Naive thymus-derived CD4-positive, alpha-beta T cell (primary cell): ENCODE measurements at regions of chr13 and their contacts with region 1.

Region 1: DNA sequence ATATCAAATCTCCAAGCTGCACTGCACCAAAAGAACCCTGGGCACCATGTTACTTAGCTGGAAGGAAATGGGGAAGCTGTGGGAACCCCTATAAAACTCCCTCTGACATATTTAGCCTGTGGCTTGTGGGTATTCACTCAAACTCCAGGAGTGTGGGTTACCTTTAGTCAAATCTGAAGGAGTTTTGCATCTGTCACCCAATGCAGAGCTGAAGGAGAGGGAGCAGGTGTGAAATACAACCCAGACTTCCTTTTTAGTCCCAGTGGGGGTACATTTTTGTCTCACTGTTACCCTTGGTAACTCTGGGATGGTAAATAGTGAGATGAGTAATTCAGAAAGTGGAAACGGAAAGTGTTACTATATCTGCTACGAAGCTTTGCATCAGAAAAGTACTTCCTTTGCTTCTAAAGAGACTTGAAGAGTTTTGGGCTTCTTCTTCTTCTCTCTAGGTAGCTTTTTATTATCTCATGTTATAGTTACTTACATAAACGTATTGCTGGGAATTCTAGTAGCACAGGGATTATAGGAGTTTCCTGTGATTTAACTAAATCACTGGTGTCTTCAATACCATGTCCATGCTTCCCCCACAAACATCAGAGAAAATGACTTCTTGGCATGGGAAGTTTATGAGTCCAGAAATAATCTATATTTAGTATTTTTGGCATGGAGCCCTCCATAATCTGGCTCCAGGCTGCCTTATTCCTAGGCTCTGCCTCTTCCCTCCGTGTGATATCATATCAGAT is 105.9 kb downstream of the AKAP11 start:
- DNase-seq: peak in 2 of 9 donors; percentile 28 to 56
- ATAC-seq: peak; percentile 83
- H3K4me3 ChIP-seq: no peak overlapping the region
- H3K4me3 Mint-ChIP-seq: peak overlapping the region in 5 of 10 donors; percentile 16 to 63 (median 33)
- H3K27ac ChIP-seq: peak overlapping the region; percentile 19
- H3K27ac Mint-ChIP-seq: peak overlapping the region in 6 of 9 donors; percentile 33 to 92 (median 55)
- H3K4me1 ChIP-seq: peaks cover 17 to 18% of the 10 kb centered on the region in 2 donors
- H3K4me1 Mint-ChIP-seq: peaks cover 10 to 61% (median 29%) of the 10 kb centered on the region in 7 donors
- H3K27me3 ChIP-seq: no peaks in the 10 kb centered on the region
- H3K27me3 Mint-ChIP-seq: no peaks in the 10 kb centered on the region

Region 2: DNA sequence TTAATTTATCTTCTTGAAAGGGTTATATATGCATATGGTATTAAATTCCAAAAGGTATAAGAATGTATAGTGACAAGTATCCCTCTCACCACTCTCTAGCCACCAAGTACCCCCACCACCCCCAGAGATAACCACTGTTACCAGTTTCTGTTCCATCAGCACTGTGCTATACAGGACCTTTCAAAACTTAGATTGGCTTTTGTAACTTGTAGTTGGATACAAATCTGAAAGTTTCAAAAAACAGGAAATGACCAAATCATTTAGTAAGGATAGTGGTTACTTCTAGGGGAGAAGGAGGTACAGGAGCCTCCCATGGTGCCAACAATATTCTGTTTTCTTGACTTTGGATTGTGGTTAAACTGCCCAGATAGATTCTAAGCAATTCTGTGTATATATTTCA is 49.1 kb before region 1 on chr13:
- CTCF ChIA-PET with region 1: interaction called, 5 read pairs
- POLR2A ChIA-PET with region 1: no interaction called
- intact Hi-C with region 1: loop called in 1 of 2 experiments (anchors 2 kb)
- DNase-seq: peak in 1 of 9 donors; percentile 26
- ATAC-seq: no peak
- H3K4me3 ChIP-seq: no peak overlapping the region
- H3K4me3 Mint-ChIP-seq: peak overlapping the region in 9 of 10 donors; percentile 9 to 70 (median 49)
- H3K27ac ChIP-seq: no peak overlapping the region
- H3K27ac Mint-ChIP-seq: peak overlapping the region; percentile 55 to 88 (median 78)
- H3K4me1 ChIP-seq: peaks cover 9 to 11% of the 10 kb centered on the region in 2 donors
- H3K4me1 Mint-ChIP-seq: peaks cover 13 to 44% (median 24%) of the 10 kb centered on the region in 7 donors
- H3K27me3 ChIP-seq: no peaks in the 10 kb centered on the region
- H3K27me3 Mint-ChIP-seq: no peaks in the 10 kb centered on the region

Region 3: GRCh38 chr13:42405665-42406390 is 28.0 kb after region 1 on chr13:
- CTCF ChIA-PET with region 1: no interaction called
- POLR2A ChIA-PET with region 1: no interaction called
- intact Hi-C with region 1: loop called in 1 of 2 experiments (anchors 1 kb)
- DNase-seq: peak in 1 of 9 donors; percentile 70
- ATAC-seq: peak; percentile 57
- H3K4me3 ChIP-seq: no peak overlapping the region
- H3K4me3 Mint-ChIP-seq: peak overlapping the region in 2 of 10 donors; percentile 3 to 62
- H3K27ac ChIP-seq: no peak overlapping the region
- H3K27ac Mint-ChIP-seq: peak overlapping the region in 1 of 9 donors; percentile 88
- H3K4me1 ChIP-seq: peaks cover 0 to 13% of the 10 kb centered on the region in 2 donors
- H3K4me1 Mint-ChIP-seq: peaks cover 0 to 29% (median 0%) of the 10 kb centered on the region in 7 donors
- H3K27me3 ChIP-seq: no peaks in the 10 kb centered on the region
- H3K27me3 Mint-ChIP-seq: no peaks in the 10 kb centered on the region

Region 4: GRCh38 chr13:42548731-42549551 is 171.1 kb after region 1 on chr13:
- CTCF ChIA-PET with region 1: no interaction called
- POLR2A ChIA-PET with region 1: no interaction called
- intact Hi-C with region 1: no loop called
- DNase-seq: no peak
- ATAC-seq: peak; percentile 87
- H3K4me3 ChIP-seq: no peak overlapping the region
- H3K4me3 Mint-ChIP-seq: peak overlapping the region in 1 of 10 donors; percentile 27
- H3K27ac ChIP-seq: no peak overlapping the region
- H3K27ac Mint-ChIP-seq: no peak overlapping the region
- H3K4me1 ChIP-seq: no peaks in the 10 kb centered on the region
- H3K4me1 Mint-ChIP-seq: peaks cover 0 to 20% (median 0%) of the 10 kb centered on the region in 7 donors
- H3K27me3 ChIP-seq: no peaks in the 10 kb centered on the region
- H3K27me3 Mint-ChIP-seq: peaks cover 0 to 3% (median 0%) of the 10 kb centered on the region in 5 donors